ENCODE measurements at regions of chr11 and their contacts with region 1.

Region 1: DNA sequence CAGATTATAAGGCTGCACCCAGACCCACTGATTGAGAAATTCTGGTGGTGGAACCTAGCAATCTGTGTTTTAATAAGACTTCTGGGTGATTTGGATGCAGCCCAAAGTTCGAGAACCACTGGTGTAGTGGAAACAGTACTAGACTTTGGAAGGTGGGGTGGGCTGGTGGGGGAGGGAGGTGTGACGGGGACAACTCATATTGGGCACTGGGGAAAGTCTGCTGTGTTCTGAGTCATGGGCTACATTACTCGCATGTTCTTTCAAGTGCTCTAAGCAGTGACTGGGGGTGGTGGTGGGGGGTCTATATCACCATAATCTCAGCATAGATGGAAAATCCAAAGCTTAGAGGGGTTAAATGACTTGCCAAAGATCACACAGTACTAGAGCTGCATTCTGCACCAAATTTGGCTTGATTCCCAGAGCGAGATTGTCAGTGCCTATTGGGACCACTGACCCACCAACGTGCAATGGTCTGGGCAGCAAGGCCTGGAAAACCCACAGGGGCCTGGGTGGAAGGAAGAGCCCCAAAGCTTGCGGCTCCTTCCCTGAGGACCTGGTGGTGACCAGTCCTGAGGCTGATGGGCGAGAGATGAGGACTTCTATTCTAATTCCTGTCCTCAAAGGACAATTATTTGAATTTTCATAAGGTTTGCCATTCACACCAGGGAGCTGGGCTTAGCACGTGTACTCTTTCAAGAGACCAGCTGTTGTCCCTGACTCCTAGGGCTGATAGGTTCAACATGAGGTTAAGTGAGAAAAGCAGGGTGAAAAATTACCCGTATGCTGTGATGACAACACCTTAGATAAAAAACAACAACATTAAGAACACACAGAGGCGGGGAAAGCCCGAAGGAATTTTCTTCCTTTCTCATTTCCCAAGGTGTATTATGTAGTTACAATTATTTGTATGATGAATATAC is 77.5 kb upstream of the NARS2 start:
- DNase-seq: peak; percentile 78
- H3K4me3 Mint-ChIP-seq: no peak overlapping the region
- H3K27ac Mint-ChIP-seq: no peak overlapping the region
- H3K4me1 Mint-ChIP-seq: peaks cover 31% of the 10 kb centered on the region
- H3K27me3 Mint-ChIP-seq: peaks cover 6% of the 10 kb centered on the region

Region 2: GRCh38 chr11:78635814-78636506 is 16.2 kb before region 1 on chr11:
- CTCF ChIA-PET with region 1: interaction called, 17 read pairs
- POLR2A ChIA-PET with region 1: no interaction called
- intact Hi-C with region 1: loop called (anchors 1 kb)
- DNase-seq: no peak
- H3K4me3 Mint-ChIP-seq: no peak overlapping the region
- H3K27ac Mint-ChIP-seq: peak overlapping the region; percentile 30
- H3K4me1 Mint-ChIP-seq: peaks cover 19% of the 10 kb centered on the region
- H3K27me3 Mint-ChIP-seq: peaks cover 10% of the 10 kb centered on the region

Region 3: DNA sequence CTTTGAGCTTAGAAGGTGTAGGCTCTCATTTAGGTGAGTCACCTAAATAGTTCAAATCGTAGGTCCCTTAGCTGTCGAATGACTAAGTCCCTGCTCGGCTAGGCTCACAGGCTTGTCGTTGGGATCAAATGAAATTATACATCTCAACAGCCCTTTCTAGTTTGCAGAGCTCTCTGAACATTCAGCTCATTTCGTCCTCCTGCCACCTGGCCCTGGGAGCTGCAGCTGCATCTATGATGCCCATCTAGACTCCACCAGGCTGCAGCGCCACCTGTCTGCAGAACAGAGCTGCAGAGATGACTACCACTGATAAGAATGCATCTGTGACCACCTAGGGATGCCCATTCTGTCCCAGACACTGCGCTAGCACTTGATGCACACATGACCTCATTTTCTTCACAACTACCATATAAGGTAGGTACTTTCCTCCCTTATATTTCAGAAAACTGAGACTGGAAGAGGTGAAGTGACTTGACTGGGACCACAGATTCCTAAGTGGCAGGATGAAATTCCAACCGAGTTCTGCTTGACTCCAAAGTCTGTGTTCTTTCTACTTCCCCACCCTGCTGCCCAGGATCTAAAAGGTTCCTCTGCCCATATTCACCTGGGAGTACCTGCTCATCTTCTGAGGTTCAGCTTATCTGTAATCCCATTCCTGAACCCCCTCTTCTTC is 63.6 kb after region 1 on chr11:
- CTCF ChIA-PET with region 1: interaction called, 167 read pairs
- POLR2A ChIA-PET with region 1: no interaction called
- intact Hi-C with region 1: no loop called
- DNase-seq: peak; percentile 72
- H3K4me3 Mint-ChIP-seq: no peak overlapping the region
- H3K27ac Mint-ChIP-seq: no peak overlapping the region
- H3K4me1 Mint-ChIP-seq: no peaks in the 10 kb centered on the region
- H3K27me3 Mint-ChIP-seq: no peaks in the 10 kb centered on the region

Measured in activated CD4-positive, alpha-beta memory T cell treated with anti-CD3 and anti-CD28 coated beads for 36 hours (primary cell).